ENCODE measurements at regions of chr11 and their contacts with region 1.

Region 1: DNA sequence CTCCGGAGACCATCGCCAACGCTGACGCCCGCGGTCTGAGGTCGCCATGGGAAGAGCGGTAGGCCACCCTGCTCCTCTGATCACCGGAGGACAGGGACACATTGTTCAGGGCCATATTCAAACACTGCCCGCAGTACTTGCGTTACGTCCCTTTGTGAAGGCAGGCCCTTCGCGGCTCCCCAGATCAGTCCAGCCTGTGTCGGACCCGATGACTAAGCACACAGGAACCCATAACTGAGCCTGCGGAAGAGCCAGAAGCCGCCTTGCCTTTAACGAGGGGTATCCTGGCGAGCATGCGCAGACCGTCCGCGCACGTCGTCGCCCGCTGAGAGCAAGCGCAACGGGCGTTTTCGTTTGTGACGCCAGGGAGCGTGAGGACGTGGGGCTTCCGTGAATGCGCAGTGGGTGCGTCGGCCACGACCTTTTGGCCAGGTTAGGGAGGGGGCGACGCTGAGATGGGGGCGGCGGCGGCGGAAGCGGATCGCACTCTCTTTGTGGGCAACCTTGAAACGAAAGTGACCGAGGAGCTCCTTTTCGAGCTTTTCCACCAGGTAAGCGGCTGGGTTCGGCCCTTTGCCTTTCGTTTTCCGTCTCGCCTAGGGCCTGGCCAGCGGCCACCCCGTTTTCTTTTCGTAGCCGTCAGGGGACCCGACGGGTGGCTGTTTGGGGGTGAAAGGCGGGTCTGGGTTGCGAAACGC is at the starts of genes C11orf71 and RBM7:
- DNase-seq: peak; percentile 95 to 98
- H3K4me3 ChIP-seq: peak within 1 kb of the TSS; percentile 89
- H3K27ac ChIP-seq: peak within 1 kb of the TSS; percentile 97
- H3K4me1 ChIP-seq: peaks cover 43% of the 10 kb centered on the region
- H3K27me3 ChIP-seq: no peaks in the 10 kb centered on the region
- CTCF ChIP-seq: 0 out of 2 replicates have a peak, but pooled peaks have one; percentile 6
- total RNA-seq, gene C11orf71: 3.7 and 4.9 TPM in 2 replicates
- total RNA-seq, gene RBM7: 18.9 and 34.7 TPM in 2 replicates

Region 2: GRCh38 chr11:114348200-114349191 is 51.9 kb before region 1 on chr11:
- CTCF ChIA-PET with region 1: no interaction called
- POLR2A ChIA-PET with region 1: interaction called, 3 read pairs
- intact Hi-C with region 1: loop called (anchors 2 kb)
- DNase-seq: peak; percentile 60 to 72
- H3K4me3 ChIP-seq: no peak overlapping the region
- H3K27ac ChIP-seq: no peak overlapping the region
- H3K4me1 ChIP-seq: peaks cover 11% of the 10 kb centered on the region
- H3K27me3 ChIP-seq: no peaks in the 10 kb centered on the region
- CTCF ChIP-seq: peak; percentile 85

Region 3: DNA sequence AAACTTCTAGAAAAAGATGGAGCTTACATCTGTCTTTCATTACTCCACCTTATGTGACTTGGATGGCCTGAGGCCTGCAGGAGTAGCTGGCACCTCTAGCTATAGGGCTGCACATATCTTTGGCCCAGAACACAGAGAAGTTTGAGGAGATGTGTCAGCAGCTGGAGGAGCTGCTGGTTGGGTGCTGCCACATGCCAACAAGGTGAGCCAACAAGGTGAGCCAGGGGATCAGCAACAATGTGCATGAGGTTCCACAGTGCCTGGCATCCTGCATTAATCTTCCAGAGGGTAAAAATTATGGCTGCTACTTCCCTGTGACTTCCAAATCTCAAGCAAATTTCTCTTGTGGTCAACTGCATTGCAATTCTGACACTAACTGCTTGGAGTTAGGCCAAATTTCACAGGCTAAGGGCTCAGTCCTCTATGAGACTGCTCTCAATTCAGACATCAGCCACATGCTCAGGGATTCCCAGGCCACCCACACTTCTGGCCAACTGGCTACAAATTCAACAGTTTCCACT is 16.1 kb after region 1 on chr11:
- CTCF ChIA-PET with region 1: no interaction called
- POLR2A ChIA-PET with region 1: interaction called, 4 read pairs
- intact Hi-C with region 1: loop called (anchors 2 kb)
- DNase-seq: peak; percentile 61 to 88
- H3K4me3 ChIP-seq: no peak overlapping the region
- H3K27ac ChIP-seq: peak overlapping the region; percentile 31
- H3K4me1 ChIP-seq: peaks cover 13% of the 10 kb centered on the region
- H3K27me3 ChIP-seq: no peaks in the 10 kb centered on the region
- CTCF ChIP-seq: no peak

Region 4: DNA sequence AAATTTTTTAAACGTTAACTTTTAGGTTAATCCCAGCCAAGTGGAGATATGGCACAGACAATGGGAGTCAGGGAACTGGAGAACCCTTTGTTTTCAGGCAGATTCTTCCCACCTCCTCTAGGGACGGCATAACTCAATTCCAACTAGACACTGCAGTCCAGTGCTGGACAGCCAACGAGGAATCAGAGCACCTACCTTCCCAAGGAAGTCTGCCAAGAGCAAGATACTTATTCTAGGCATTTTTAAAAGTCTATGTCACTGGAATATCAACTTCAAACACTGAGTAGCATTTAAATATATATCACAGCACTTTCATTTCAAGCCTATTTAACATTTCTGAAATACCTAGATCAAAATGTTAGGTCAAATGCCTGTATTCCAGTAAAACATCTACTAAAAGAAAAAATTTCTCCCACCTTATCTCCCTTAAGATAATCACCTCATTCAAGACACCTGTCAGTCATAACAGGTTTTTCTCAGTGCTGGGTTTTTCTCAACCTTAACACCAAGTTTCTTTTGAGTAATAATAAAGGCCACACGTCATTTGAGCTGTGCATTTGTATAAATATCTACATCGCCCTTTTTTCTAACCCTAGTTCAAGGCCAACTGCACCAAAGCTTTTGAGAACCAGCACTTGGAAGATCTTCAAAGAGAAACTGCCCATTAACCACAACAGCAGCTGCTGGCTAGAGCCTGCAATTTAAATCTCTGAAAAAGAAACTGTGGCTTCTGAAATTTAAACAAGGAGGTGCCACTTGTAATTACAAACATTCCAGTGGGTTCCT is 1096.7 kb after region 1 on chr11:
- CTCF ChIA-PET with region 1: no interaction called
- POLR2A ChIA-PET with region 1: no interaction called
- intact Hi-C with region 1: no loop called
- DNase-seq: no peak
- H3K4me3 ChIP-seq: no peak overlapping the region
- H3K27ac ChIP-seq: no peak overlapping the region
- H3K4me1 ChIP-seq: no peaks in the 10 kb centered on the region
- H3K27me3 ChIP-seq: peaks cover 22% of the 10 kb centered on the region; the same call in 1 of the 2 replicates
- CTCF ChIP-seq: no peak

Measured in PC-9 (cell line).